Posterior vena cava (tissue), 2 donors: ENCODE measurements at regions of chr5 and their contacts with region 1.

Region 1: GRCh38 chr5:5141625-5142532 is 1.7 kb downstream of the ADAMTS16 start:
- DNase-seq: no peak

Region 2: DNA sequence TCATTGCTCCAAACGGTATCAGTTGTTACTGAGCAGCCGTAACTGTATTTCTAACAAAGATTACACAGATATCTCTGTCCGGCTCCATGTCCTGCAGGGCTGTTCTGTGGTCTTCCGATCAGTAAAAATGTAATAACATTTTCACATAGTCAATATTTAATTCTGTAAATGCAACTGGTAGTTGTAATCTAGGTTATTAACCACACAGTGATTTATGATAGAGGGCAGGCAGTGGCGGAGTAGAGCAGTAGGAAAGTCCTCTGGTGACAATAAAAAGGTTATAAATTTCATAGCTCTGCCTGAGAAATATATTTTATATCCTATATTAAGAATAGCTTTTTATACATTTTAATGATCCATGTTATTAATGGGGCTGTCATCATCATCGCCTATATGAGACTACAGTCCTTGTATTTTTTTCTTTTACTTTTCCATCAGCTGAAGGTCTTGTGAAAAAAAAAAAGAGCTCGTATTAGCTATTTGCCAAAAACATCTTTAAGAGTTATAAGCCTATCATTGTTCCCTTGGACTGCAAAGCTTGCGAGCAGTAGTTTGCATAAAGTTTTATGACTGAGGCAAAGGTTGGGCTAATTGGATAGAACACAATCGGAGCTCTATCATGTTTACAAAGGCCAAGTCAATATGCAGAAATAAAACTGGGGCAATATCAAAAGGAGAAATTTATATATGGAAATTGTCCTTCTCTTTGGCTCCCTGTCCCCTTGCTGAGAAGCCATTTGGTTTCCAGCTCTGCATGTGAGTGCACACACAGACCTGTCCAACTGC is 898.2 kb before region 1 on chr5:
- intact Hi-C with region 1: no loop called
- DNase-seq: no peak

Region 3: DNA sequence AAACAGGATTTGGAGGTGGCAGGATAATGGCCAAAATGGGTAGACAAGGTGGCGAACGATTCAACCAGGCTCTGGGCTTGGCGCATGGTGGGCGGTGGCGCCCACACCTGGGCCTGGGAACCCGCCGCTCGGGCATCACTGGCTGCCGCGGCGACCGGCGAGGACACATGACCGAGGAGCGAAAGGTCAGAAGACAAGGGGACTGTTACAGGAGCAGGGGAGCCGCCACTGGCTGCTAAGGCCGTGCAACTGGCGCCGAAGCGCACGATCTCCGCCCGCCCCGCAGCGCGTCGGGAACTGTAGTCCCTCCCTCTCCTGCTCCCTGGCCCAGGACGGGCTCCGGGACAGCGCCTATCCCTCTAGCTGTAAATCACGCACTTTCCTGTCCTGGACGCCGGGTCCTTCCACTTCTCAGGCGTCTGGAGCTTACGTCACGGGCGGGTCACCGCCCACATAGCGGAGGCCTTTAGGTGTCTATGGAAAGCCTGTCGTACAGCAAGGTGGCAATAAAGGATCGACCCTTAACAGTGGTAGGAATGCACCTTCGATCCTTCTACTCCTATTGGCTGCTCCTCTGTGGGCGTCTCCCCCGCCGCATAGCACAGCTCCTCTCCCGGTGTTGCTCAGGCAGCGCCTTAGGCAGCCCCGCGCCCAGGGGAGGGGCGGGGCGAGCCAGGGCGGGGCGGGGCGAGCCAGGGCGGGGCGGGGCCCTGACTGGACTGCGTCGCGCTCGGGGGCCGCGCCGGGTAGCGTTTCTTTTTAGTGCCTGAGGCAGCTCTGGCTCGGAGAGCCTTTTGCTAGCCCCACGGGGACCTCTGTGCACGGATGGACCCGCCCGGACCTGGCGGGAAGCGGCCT is 280.3 kb after region 1 on chr5 and contains the start of gene ICE1:
- intact Hi-C with region 1: loop called (anchors 5 to 10 kb)
- DNase-seq: peak; percentile 99
- total RNA-seq, gene ICE1: 29.9 to 30.4 TPM